Transverse colon (tissue), 4 donors: ENCODE measurements at regions of chr5 and their contacts with region 1.

Region 1: DNA sequence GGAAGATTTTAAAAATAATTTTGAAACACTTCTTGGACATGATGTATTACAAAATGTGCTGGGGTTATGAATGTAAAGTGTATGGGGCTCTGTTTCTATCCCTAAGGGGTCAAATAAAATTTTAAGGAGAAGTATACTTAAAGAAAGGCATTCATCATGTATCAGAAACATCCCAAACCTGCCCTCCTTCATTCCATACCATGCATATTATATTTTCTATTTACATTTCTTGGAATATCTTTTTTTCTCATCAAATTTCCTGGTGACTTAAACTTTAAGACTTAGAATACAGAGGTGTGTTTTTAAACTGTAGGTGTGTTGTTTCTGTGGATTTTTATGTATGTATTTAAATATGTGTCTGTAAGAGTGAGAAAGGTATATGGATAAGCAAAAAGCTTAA is 96.1 kb upstream of the ADAMTS19 start:
- DNase-seq: no peak
- H3K4me3 ChIP-seq: no peak overlapping the region
- H3K27ac ChIP-seq: no peak overlapping the region
- H3K4me1 ChIP-seq: no peaks in the 10 kb centered on the region
- H3K27me3 ChIP-seq: no peaks in the 10 kb centered on the region
- CTCF ChIP-seq: no peak
- EP300 ChIP-seq: no peak
- POLR2A ChIP-seq: no peak

Region 2: GRCh38 chr5:129384736-129385135 is 20.7 kb after region 1 on chr5:
- in situ Hi-C with region 1: no loop called
- intact Hi-C with region 1: loop called (anchors 1 kb)
- DNase-seq: no peak
- H3K4me3 ChIP-seq: no peak overlapping the region
- H3K27ac ChIP-seq: no peak overlapping the region
- H3K4me1 ChIP-seq: peaks cover 0 to 7% (median 0%) of the 10 kb centered on the region in 4 donors
- H3K27me3 ChIP-seq: no peaks in the 10 kb centered on the region
- CTCF ChIP-seq: no peak
- EP300 ChIP-seq: no peak
- POLR2A ChIP-seq: no peak